ENCODE measurements at regions of chr14 and their contacts with region 1.

Region 1: GRCh38 chr14:65287264-65288131 is 125.0 kb upstream of the FUT8 start:
- DNase-seq: peak; percentile 63
- H3K4me3 Mint-ChIP-seq: peak overlapping the region; percentile 82
- H3K27ac Mint-ChIP-seq: peak overlapping the region; percentile 97
- H3K4me1 Mint-ChIP-seq: peaks cover 82% of the 10 kb centered on the region
- H3K27me3 Mint-ChIP-seq: no peaks in the 10 kb centered on the region

Region 2: DNA sequence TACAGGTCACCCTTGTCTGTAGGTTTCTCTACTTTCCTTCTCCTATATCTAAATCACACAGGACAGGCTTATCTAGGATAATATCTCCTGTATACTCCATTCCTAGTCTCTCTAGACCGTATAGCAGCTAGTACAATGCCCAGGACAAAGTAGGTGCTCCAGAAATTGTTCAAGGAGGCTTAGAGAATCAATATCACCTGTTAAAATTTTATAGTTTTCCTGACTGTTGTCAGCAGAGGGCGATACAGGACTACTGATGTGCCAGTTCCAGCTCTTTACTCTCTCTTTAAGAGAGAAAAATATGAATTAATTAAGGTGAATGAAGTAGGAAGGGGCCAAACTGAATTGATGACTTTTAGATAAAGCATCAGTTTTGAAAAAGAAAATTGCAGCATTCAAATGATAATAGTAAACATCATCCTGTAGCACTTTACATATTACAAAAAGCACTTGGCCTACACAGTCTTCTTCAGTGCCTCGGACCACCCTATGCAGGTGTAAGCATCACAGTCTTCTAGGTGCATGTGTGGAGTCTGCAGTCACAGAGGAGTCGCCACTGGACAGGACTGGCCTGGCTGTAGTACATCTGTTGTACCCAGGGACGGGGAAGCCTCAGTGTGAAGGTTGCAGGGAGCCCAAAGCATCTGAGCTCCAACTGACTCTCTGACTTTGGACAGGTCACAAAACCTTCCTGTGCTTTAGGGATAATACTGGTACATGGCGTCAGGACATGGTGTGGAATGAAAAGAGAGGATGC is 123.3 kb before region 1 on chr14:
- intact Hi-C with region 1: loop called (anchors 1 kb)
- DNase-seq: peak; percentile 23
- H3K4me3 Mint-ChIP-seq: no peak overlapping the region
- H3K27ac Mint-ChIP-seq: no peak overlapping the region
- H3K4me1 Mint-ChIP-seq: peaks cover 50% of the 10 kb centered on the region
- H3K27me3 Mint-ChIP-seq: peaks cover 2% of the 10 kb centered on the region

Region 3: GRCh38 chr14:65222440-65222858 is 65.0 kb before region 1 on chr14:
- intact Hi-C with region 1: loop called (anchors 1 kb)
- DNase-seq: peak; percentile 34
- H3K4me3 Mint-ChIP-seq: no peak overlapping the region
- H3K27ac Mint-ChIP-seq: peak overlapping the region; percentile 41
- H3K4me1 Mint-ChIP-seq: peaks cover 48% of the 10 kb centered on the region
- H3K27me3 Mint-ChIP-seq: no peaks in the 10 kb centered on the region

Region 4: GRCh38 chr14:65255536-65256461 is 31.7 kb before region 1 on chr14:
- intact Hi-C with region 1: no loop called
- DNase-seq: no peak
- H3K4me3 Mint-ChIP-seq: no peak overlapping the region
- H3K27ac Mint-ChIP-seq: no peak overlapping the region
- H3K4me1 Mint-ChIP-seq: peaks cover 30% of the 10 kb centered on the region
- H3K27me3 Mint-ChIP-seq: no peaks in the 10 kb centered on the region

Region 5: DNA sequence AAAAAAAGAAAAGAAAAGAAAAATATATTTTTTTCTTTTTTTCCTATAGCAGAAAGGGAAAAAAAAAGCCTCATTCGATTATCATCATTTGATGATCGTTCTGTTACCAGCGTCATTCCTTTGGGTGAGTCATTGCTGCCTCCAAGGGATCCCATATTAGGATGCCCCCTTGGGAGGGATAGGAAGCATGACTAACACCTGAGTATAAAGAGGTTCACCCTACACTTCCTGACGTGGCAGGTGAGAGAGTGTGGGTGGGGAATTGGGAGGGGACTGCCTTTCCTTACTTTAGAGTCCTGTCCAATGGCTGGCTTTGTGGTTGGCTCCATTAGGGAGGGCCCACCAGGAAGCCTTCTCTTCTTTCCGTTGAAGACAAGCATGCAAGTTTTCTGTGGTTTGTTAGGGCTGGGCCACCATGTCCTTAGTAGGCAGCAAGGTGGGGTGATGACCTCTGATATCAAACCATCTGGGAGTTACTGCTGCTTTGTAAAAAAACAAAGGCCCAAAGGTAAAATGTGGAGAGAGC is 68.9 kb after region 1 on chr14:
- intact Hi-C with region 1: loop called (anchors 1 kb)
- DNase-seq: no peak
- H3K4me3 Mint-ChIP-seq: peak overlapping the region; percentile 12
- H3K27ac Mint-ChIP-seq: peak overlapping the region; percentile 87
- H3K4me1 Mint-ChIP-seq: peaks cover 87% of the 10 kb centered on the region
- H3K27me3 Mint-ChIP-seq: no peaks in the 10 kb centered on the region

Region 6: GRCh38 chr14:65517635-65518542 is 230.4 kb after region 1 on chr14:
- intact Hi-C with region 1: loop called (anchors 5 kb)
- DNase-seq: no peak
- H3K4me3 Mint-ChIP-seq: no peak overlapping the region
- H3K27ac Mint-ChIP-seq: peak overlapping the region; percentile 76
- H3K4me1 Mint-ChIP-seq: peaks cover 56% of the 10 kb centered on the region
- H3K27me3 Mint-ChIP-seq: no peaks in the 10 kb centered on the region

Region 7: GRCh38 chr14:65927931-65928356 is 640.4 kb after region 1 on chr14:
- intact Hi-C with region 1: loop called (anchors 2 kb)
- DNase-seq: peak; percentile 82
- H3K4me3 Mint-ChIP-seq: peak overlapping the region; percentile 50
- H3K27ac Mint-ChIP-seq: peak overlapping the region; percentile 86
- H3K4me1 Mint-ChIP-seq: peaks cover 60% of the 10 kb centered on the region
- H3K27me3 Mint-ChIP-seq: peaks cover 4% of the 10 kb centered on the region